ENCODE measurements at regions of chr15 and their contacts with region 1.

Region 1: DNA sequence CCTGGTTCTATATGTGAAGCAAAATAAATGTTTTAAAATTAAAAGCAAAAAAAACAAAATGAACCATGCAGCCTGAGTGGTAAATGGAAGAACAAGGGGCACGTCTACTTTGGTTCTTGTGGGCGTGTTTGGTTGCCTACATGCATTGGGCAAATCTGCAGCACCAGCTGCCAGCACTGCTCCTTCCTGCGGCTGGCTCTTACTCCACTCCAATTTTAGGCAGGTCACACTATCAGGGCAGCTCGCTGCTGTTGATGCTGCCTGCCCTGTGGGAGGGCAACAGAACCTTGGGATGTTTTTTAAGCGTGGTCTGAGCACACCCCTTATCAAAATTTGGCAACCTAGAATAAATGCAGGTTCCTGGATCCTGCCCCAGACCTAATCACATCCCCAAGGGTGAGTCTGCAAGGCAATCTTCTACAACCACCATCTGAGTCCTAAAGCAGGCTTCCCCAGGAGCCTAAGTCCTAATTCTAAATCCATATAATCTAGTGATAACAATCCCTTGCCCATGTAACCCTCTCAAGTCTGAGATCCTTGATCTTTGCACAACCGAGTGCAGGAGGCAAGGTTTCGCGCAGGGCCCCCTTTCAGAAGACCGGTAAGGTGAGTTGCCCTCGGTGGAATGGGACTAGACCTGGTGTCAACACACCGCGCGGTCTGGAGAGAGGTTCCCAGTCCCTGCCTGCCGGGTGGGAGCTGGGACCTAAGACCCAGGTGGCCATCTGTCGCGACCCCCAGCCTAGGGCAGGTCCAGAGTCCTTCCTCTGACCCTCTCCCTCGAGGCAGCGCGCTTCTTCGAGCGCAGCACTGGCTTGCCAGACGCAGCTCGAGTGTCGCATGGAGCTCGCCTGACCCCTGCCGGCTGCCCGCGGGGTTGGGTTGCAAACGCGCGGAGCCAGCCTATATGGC is 15.9 kb downstream of the IVD start:
- DNase-seq: peak; percentile 74 to 87 (median 83)
- H3K4me3 ChIP-seq: no peak overlapping the region
- H3K27ac ChIP-seq: peak overlapping the region in 3 of 5 donors; percentile 30 to 77 (median 43)
- H3K4me1 ChIP-seq: peaks cover 21 to 23% of the 10 kb centered on the region in 2 donors
- H3K27me3 ChIP-seq: no peaks in the 10 kb centered on the region
- CTCF ChIP-seq: peak; percentile 79 to 99 (median 96)
- POLR2A ChIP-seq: no peak

Region 2: GRCh38 chr15:40274350-40275274 is 146.9 kb before region 1 on chr15:
- intact Hi-C with region 1: no loop called
- DNase-seq: peak; percentile 79 to 92 (median 84)
- H3K4me3 ChIP-seq: no peak overlapping the region
- H3K27ac ChIP-seq: no peak overlapping the region
- H3K4me1 ChIP-seq: no peaks in the 10 kb centered on the region
- H3K27me3 ChIP-seq: peaks cover 6% of the 10 kb centered on the region
- CTCF ChIP-seq: peak; percentile 100
- POLR2A ChIP-seq: no peak

Region 3: DNA sequence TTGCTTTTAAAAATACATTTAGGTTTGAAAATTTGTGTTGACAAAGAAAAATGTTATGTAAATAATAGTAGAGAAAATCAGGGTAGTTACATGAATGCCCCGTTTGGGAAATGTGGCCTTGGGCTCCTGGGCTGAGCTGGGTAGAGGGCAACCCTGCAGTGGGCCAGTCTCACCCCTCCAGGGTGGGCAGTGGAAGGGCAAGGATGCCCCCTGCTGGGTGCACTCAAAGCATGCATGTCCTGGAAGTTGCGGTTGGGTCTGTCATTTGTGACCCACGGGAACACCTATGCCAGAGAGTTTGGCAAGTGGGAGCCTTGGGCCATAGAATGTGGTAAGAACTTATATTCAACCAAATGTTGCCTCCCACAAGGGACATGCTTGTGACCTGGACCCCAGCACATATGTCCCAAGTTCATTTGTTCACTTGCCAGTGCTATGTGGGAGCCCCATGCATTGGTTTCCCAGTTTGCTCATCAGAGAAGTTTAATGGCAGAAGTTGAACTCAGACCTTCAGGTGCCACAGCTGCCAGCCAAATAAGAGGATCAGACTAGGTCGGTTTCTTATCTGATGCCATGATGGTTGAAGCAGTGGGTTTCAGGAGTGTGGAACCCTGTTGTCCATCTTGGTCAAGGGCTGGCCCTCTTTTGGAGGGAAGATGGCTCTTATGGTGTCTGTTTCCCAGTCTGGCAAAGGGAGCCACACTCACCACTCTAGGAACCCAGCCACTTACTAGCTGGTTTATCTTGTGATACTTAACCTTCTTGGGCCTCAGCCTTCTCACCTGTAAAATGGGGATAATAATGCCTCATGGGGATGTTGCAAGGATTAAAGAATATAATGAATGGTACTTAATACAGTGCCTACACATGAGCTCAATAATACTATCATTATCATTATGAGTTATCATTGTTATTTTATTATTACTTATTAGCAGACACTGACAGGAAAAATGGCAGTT is 111.2 kb before region 1 on chr15:
- intact Hi-C with region 1: no loop called
- DNase-seq: peak in 6 of 7 donors; percentile 53 to 76 (median 59)
- H3K4me3 ChIP-seq: no peak overlapping the region
- H3K27ac ChIP-seq: no peak overlapping the region
- H3K4me1 ChIP-seq: peaks cover 2 to 7% of the 10 kb centered on the region in 2 donors
- H3K27me3 ChIP-seq: no peaks in the 10 kb centered on the region
- CTCF ChIP-seq: peak; percentile 42 to 74 (median 69)
- POLR2A ChIP-seq: no peak

Region 4: DNA sequence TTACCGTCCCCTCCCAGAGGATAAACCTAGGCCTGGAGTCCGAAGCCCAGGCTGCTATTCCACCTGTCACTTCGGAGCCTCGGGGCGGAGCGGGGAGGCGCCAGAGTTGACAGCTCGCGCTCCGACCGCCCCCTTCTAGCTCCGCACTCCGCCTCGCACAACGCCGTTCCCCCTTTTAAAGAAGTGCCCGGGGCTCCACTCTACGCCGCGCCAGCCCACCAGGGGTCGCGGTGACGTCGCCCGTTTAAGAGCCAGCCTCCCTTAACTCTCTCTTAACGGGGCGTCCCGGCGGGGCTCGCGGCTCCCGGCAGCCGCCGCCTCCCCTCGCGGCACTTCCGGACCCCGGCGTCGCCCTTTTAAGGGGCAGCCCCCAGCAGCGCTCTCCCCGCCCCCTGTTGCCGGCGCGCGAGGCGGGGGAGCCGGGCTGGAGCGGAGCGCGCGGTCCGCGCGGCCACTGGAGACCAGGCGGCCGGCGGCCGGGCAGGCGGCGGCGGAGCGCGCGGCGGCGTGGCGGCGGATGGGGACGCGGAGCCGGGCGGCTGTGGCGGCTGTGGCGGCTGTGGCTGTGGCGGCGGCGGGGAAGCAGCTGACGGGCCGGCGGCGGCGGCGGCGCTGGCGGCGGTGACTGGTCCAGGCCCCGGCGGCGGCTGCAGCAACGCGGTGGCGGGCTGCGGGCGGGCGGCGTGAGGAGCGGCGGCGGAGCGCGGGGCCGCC is 98.1 kb before region 1 on chr15 and contains the start of gene INAFM2:
- intact Hi-C with region 1: loop called in 1 of 2 experiments (anchors 5 kb)
- DNase-seq: peak; percentile 79 to 94 (median 83)
- H3K4me3 ChIP-seq: peak within 1 kb of the TSS in 3 of 4 donors; percentile 55 to 87 (median 64)
- H3K27ac ChIP-seq: peak within 1 kb of the TSS in 3 of 5 donors; percentile 52 to 84 (median 78)
- H3K4me1 ChIP-seq: peaks cover 0 to 23% of the 10 kb centered on the region in 2 donors
- H3K27me3 ChIP-seq: no peaks in the 10 kb centered on the region
- CTCF ChIP-seq: peak; percentile 21 to 71 (median 56)
- POLR2A ChIP-seq: peak; percentile 43 to 76
- total RNA-seq, gene INAFM2: 10.6 to 25.5 (median 19.3) TPM

Region 5: DNA sequence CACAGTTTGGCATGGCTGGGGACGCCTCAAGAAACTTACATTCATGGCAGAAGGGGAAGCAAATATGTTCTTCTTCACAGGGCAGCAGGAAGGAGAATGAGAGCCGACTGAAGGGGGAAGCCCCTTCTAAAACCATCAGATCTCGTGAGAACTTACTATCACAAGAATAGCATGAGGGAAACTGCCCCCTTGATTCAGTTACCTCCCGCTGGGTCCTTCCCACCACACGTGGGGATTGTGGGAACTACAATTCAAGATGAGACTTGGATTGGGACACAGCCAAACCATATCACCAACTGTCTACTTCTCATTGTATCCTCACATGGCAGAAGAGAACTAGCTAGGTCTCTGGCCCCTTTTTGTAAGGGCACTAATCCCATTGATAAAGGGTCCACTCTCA is 112.9 kb after region 1 on chr15:
- intact Hi-C with region 1: no loop called
- DNase-seq: peak in 1 of 7 donors; percentile 6
- H3K4me3 ChIP-seq: no peak overlapping the region
- H3K27ac ChIP-seq: no peak overlapping the region
- H3K4me1 ChIP-seq: peaks cover 0 to 4% of the 10 kb centered on the region in 2 donors
- H3K27me3 ChIP-seq: no peaks in the 10 kb centered on the region
- CTCF ChIP-seq: no peak
- POLR2A ChIP-seq: no peak

Measured in adrenal gland (tissue), 19 donors.